ENCODE measurements at regions of chr6 and their contacts with region 1.

Region 1: DNA sequence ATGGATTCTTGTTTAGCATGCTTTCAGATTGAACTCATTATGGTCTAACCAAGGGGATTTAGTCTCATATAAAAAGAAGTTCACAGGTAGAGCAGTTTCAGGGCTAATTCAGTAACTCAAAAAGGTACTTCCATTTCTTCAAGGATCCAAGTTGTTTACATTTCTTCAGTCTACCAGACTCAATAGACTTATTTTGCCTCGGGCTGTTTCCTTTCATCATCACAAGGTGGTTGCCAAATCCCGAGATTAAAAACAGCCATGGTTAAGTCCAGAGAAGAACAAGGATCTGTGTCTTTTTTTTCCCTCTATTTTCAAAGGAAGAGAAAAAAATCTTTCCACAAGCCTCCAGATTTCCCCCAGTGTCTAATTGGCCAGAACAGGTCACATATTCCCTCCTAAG is 69.8 kb upstream of the SNX9 start:
- DNase-seq: no peak
- ATAC-seq: no peak
- H3K4me3 ChIP-seq: no peak overlapping the region
- H3K27ac ChIP-seq: no peak overlapping the region
- H3K4me1 ChIP-seq: peaks cover 4% of the 10 kb centered on the region
- H3K27me3 ChIP-seq: no peaks in the 10 kb centered on the region
- CTCF ChIP-seq: no peak
- POLR2A ChIP-seq: no peak

Region 2: DNA sequence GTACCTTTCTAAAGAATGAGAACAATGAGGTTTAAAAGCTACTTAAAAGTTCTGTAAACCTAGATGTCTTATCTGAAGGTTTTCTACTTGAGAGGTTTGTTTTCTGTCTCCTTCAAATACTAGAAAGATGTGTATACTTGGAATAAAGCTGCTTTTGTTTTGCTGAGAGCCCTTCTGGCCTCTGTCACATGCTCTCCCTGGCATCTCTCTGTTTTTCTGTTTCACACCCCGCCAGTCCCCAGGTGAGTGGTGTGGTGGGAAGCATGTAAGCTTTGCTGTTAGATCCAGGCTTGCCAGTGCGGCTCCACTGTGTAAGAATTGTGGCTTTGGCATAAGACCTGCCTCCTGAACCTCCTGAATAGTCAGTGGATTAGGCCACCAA is 126.6 kb after region 1 on chr6:
- intact Hi-C with region 1: loop called (anchors 5 kb)
- DNase-seq: peak in 1 of 4 donors; percentile 31
- ATAC-seq: peak; percentile 60
- H3K4me3 ChIP-seq: no peak overlapping the region
- H3K27ac ChIP-seq: peak overlapping the region in 2 of 4 donors; percentile 11 to 23
- H3K4me1 ChIP-seq: no peaks in the 10 kb centered on the region
- H3K27me3 ChIP-seq: no peaks in the 10 kb centered on the region
- CTCF ChIP-seq: no peak
- POLR2A ChIP-seq: no peak